ENCODE measurements at regions of chr7 and their contacts with region 1.

Region 1: DNA sequence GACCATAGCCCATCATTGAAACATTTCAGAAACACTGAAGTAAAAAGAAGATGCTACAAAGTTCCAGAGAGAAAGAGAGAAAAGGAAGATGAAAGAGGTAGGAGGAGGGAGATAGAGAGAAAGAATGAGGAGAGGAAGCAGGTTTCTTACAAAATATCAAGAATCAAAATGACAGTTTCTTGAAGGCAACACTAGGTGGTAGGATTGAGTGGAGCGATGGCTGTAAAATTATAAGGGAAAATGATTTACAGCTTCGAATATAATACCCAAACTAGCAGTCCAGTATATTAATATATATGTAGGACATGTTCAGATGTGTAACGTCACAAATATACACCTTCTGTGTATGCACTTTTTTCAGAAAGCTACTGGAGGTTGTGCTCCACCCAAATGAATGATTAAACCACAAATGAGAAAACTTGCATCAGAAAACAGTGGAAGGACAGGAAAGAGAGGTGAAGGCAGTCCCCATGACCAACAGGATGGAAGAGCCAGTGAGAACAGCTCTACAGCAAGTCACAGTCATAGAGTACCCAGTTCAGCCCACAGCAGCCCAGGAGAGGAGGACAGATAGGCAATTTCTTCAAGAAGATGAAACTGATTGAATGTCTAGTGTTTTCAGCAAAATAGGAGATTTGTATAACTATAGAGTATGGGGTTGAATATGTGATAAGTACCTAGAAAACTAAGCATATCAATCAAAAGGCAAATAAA is 151.5 kb upstream of the TARP start:
- DNase-seq: peak in 2 of 5 donors; percentile 4 to 7
- H3K4me3 ChIP-seq: no peak overlapping the region
- H3K4me3 Mint-ChIP-seq: peak overlapping the region; percentile 31 to 70 (median 64)
- H3K27ac ChIP-seq: no peak overlapping the region
- H3K27ac Mint-ChIP-seq: peak overlapping the region; percentile 10 to 91 (median 67)
- H3K4me1 ChIP-seq: peaks cover 41% of the 10 kb centered on the region
- H3K4me1 Mint-ChIP-seq: peaks cover 33 to 57% (median 44%) of the 10 kb centered on the region in 4 donors
- H3K27me3 ChIP-seq: no peaks in the 10 kb centered on the region
- H3K27me3 Mint-ChIP-seq: peaks cover 2 to 3% of the 10 kb centered on the region in 2 donors

Region 2: DNA sequence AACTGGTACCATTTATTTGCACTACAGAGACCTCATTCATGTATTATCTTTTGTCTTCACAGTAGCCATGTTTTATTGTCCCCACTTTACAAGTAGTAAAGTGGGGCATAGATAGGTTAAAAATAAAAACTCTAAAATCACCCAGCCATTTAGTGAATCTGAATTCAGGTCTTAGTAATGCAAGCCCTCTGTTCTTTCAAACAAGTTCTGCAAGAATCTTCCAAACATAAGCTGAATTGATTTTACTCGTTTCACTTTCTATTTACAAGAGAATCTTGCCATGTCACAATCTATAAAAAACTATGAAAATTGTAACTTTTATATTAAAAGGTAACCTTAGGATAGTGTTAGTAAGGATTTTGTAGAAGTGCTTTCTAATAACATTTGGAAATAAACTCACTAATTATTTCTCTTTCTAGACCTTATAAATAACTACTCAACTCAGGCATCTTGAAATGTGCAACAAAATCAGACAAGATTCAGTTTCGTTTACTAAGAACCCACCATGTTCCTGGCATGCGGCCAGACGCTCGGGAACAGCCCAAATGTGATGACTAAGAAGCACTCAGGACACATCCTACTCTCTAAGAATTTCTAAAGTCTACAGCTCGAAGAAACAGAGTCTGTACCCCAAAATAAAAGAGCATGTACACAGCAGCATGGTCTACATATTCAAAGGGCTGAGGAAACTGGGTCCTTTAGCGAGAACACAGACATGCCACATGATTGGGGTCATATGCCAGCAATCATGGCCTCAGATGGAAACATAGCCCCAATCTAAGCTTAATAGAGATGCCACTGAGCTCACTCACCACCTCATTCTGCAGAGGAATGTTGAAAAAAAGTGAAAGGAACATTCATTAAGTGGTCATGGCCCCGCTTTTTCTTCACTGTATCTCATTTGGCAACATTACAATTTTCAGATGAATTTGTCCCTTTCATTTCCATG is 38.6 kb after region 1 on chr7:
- CTCF ChIA-PET with region 1: no interaction called
- POLR2A ChIA-PET with region 1: no interaction called
- intact Hi-C with region 1: loop called (anchors 2 kb)
- DNase-seq: peak; percentile 37 to 77 (median 69)
- H3K4me3 ChIP-seq: peak overlapping the region in 1 of 2 donors; percentile 3
- H3K4me3 Mint-ChIP-seq: peak overlapping the region; percentile 62 to 82 (median 72)
- H3K27ac ChIP-seq: no peak overlapping the region
- H3K27ac Mint-ChIP-seq: peak overlapping the region; percentile 4 to 89 (median 63)
- H3K4me1 ChIP-seq: peaks cover 12% of the 10 kb centered on the region
- H3K4me1 Mint-ChIP-seq: peaks cover 7 to 22% (median 12%) of the 10 kb centered on the region in 4 donors
- H3K27me3 ChIP-seq: no peaks in the 10 kb centered on the region
- H3K27me3 Mint-ChIP-seq: no peaks in the 10 kb centered on the region

Region 3: GRCh38 chr7:38541440-38541839 is 116.5 kb after region 1 on chr7:
- CTCF ChIA-PET with region 1: no interaction called
- POLR2A ChIA-PET with region 1: no interaction called
- intact Hi-C with region 1: loop called (anchors 2 kb)
- DNase-seq: no peak
- H3K4me3 ChIP-seq: no peak overlapping the region
- H3K4me3 Mint-ChIP-seq: no peak overlapping the region
- H3K27ac ChIP-seq: no peak overlapping the region
- H3K27ac Mint-ChIP-seq: no peak overlapping the region
- H3K4me1 ChIP-seq: no peaks in the 10 kb centered on the region
- H3K4me1 Mint-ChIP-seq: no peaks in the 10 kb centered on the region
- H3K27me3 ChIP-seq: no peaks in the 10 kb centered on the region
- H3K27me3 Mint-ChIP-seq: peaks cover 1 to 5% of the 10 kb centered on the region in 2 donors

Region 4: GRCh38 chr7:38660427-38661099 is 235.7 kb after region 1 on chr7:
- CTCF ChIA-PET with region 1: interaction called, 6 read pairs
- POLR2A ChIA-PET with region 1: interaction called, 3 read pairs
- intact Hi-C with region 1: loop called (anchors 1 kb)
- DNase-seq: peak in 4 of 5 donors; percentile 32 to 42 (median 34)
- H3K4me3 ChIP-seq: no peak overlapping the region
- H3K4me3 Mint-ChIP-seq: no peak overlapping the region
- H3K27ac ChIP-seq: no peak overlapping the region
- H3K27ac Mint-ChIP-seq: no peak overlapping the region
- H3K4me1 ChIP-seq: no peaks in the 10 kb centered on the region
- H3K4me1 Mint-ChIP-seq: no peaks in the 10 kb centered on the region
- H3K27me3 ChIP-seq: no peaks in the 10 kb centered on the region
- H3K27me3 Mint-ChIP-seq: peaks cover 20 to 23% of the 10 kb centered on the region in 2 donors